Right lobe of liver (tissue), 6 donors: ENCODE measurements at regions of chr12 and their contacts with region 1.

Region 1: GRCh38 chr12:6620137-6620884 is 13.1 kb upstream of the CHD4 start:
- DNase-seq: peak in 2 of 3 donors; percentile 56 to 65
- ATAC-seq: peak; percentile 46 to 64 (median 58)
- H3K4me3 ChIP-seq: peak overlapping the region in 1 of 3 donors; percentile 34
- H3K27ac ChIP-seq: no peak overlapping the region
- H3K4me1 ChIP-seq: no peaks in the 10 kb centered on the region
- H3K27me3 ChIP-seq: no peaks in the 10 kb centered on the region
- CTCF ChIP-seq: peak; percentile 34 to 59 (median 41)
- POLR2A ChIP-seq: no peak

Region 2: DNA sequence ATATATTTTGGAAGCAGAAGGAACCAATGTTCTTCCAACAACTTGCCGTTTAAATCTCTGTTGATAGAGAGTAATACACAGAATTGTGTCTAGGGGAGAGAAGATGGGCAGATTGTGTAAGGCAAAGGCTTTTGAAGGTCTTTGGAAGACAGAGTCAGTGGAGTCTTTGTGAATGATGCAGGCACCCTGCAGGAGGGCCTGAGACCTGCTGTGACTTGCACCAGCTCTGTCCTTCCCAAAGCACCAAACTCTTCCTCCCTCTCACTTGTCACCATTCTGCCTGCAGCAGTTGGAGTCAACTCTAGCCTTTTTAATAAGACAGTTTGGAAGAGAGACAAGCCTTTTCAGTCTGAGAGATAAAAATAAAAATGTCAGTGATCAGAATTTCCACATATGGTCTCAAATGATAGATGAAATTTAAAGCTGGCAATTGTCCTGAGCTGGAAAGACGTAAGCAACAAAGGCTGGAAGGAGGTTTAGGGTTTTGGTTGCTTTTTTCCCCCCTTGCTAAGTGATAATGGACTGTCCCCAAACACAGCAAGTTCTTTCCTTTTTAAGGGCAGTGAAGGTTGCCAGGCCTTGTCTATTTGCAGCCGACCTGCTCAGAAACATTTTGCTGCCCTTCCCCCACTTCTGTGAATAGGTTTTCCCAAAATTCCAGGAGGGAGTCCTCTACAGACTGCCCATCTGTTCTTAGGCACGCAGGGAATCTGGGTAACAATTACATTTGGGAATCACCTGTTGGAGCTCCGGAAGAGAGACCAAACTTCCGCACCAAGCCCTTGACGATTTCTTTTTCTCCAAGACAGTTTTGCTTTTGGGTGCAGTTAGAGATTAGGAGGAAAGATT is 1291.4 kb before region 1 on chr12:
- intact Hi-C with region 1: no loop called
- DNase-seq: no peak
- ATAC-seq: no peak
- H3K4me3 ChIP-seq: no peak overlapping the region
- H3K27ac ChIP-seq: no peak overlapping the region
- H3K4me1 ChIP-seq: no peaks in the 10 kb centered on the region
- H3K27me3 ChIP-seq: no peaks in the 10 kb centered on the region
- CTCF ChIP-seq: no peak
- POLR2A ChIP-seq: no peak

Region 3: DNA sequence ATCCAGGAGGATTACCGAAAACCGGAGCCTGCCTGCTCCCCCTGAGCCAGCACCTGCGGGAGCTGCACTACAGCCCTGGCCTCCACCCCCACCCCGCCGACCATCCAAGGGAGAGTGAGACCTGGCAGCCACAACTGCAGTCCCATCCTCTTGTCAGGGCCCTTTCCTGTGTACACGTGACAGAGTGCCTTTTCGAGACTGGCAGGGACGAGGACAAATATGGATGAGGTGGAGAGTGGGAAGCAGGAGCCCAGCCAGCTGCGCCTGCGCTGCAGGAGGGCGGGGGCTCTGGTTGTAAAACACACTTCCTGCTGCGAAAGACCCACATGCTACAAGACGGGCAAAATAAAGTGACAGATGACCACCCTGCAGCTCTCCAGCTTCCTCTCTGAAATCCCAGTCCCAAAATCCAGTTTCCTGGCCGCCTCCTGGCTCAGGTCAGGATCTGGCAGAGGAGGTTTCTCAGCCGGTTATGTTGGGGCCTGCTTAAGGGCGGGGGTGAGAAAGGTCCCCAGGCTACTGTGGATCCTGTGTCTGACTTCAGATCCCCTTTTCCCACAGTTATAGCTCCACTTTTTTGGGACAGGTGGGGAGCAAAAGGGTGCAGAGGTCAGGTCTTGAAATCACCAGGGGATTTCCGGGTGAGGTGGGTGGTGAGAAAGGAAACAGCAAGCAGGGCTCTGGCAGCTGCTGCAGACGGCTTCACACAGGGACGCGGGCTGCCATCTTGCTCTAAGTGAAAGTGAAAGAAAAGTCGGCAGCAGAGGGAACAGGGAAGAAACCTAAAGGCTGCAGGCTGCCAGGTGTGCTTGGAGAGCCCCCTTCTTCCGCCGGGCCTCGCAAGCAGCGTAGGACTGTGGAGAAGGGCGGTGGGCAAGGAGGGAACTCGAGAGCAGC is 168.7 kb before region 1 on chr12 and contains the start of gene TAPBPL:
- intact Hi-C with region 1: no loop called
- DNase-seq: peak; percentile 82 to 93 (median 90)
- ATAC-seq: peak; percentile 89 to 92 (median 90)
- H3K4me3 ChIP-seq: peak within 1 kb of the TSS; percentile 79 to 92 (median 80)
- H3K27ac ChIP-seq: peak within 1 kb of the TSS; percentile 94 to 96 (median 96)
- H3K4me1 ChIP-seq: peaks cover 0 to 13% (median 6%) of the 10 kb centered on the region in 4 donors
- H3K27me3 ChIP-seq: no peaks in the 10 kb centered on the region
- CTCF ChIP-seq: no peak
- POLR2A ChIP-seq: peak; percentile 74
- total RNA-seq, gene TAPBPL: 13.8 to 29.3 (median 21.4) TPM

Region 4: DNA sequence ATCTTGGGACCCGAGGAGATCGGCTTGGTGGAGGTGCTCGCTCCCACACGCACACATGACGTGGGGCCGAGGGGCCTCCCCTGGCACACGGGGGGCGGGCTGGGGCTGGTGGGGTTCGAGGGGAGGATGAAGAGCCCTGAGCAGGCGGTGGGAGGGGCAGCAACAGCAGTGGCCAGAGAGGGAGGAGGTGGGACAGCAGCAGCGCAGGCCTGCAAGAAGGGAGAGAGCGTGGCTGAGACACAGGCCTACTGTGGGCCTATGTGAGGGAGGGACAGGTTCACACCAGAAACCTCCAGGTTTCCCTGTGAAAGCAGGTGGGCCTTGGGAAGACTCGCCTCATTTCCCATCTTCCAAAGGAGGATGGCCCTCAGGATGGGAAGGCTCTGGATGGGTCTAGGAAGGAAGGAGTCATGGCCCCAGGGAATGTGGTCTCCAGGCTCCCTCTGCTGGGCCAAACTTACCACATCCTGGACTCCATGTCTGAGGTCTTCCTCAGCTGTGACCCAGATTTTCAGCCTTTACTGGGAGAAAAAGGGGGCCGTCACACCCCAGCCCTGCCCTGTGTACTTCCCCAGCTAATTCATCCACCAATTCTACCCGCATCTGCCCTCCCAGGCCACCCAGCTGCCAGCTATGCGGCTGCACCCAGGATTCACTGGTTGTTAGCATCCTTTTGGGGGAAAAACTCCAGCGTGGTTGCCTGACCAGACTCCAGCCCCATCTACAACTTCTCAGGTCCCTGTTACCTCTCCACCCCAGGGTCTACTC is 77.5 kb after region 1 on chr12:
- intact Hi-C with region 1: loop called in 1 of 2 experiments (anchors 10 kb)
- DNase-seq: peak in 1 of 3 donors; percentile 27
- ATAC-seq: peak; percentile 67 to 87 (median 69)
- H3K4me3 ChIP-seq: no peak overlapping the region
- H3K27ac ChIP-seq: no peak overlapping the region
- H3K4me1 ChIP-seq: peaks cover 0 to 5% (median 0%) of the 10 kb centered on the region in 4 donors
- H3K27me3 ChIP-seq: peaks cover 6 to 11% of the 10 kb centered on the region in 2 donors
- CTCF ChIP-seq: peak; percentile 24 to 49 (median 38)
- POLR2A ChIP-seq: no peak

Region 5: GRCh38 chr12:6724397-6724759 is 104.1 kb after region 1 on chr12:
- intact Hi-C with region 1: no loop called
- DNase-seq: no peak
- ATAC-seq: peak; percentile 3 to 17 (median 12)
- H3K4me3 ChIP-seq: peak overlapping the region; percentile 55 to 74 (median 68)
- H3K27ac ChIP-seq: peak overlapping the region; percentile 58 to 82 (median 79)
- H3K4me1 ChIP-seq: peaks cover 0 to 13% (median 0%) of the 10 kb centered on the region in 4 donors
- H3K27me3 ChIP-seq: no peaks in the 10 kb centered on the region
- CTCF ChIP-seq: no peak
- POLR2A ChIP-seq: no peak

Region 6: GRCh38 chr12:6839482-6840201 is 219.3 kb after region 1 on chr12:
- intact Hi-C with region 1: loop called in 1 of 2 experiments (anchors 10 kb)
- DNase-seq: no peak
- ATAC-seq: no peak
- H3K4me3 ChIP-seq: no peak overlapping the region
- H3K27ac ChIP-seq: no peak overlapping the region
- H3K4me1 ChIP-seq: no peaks in the 10 kb centered on the region
- H3K27me3 ChIP-seq: no peaks in the 10 kb centered on the region
- CTCF ChIP-seq: no peak
- POLR2A ChIP-seq: no peak